ENCODE measurements at regions of chr14 and their contacts with region 1.

Region 1: DNA sequence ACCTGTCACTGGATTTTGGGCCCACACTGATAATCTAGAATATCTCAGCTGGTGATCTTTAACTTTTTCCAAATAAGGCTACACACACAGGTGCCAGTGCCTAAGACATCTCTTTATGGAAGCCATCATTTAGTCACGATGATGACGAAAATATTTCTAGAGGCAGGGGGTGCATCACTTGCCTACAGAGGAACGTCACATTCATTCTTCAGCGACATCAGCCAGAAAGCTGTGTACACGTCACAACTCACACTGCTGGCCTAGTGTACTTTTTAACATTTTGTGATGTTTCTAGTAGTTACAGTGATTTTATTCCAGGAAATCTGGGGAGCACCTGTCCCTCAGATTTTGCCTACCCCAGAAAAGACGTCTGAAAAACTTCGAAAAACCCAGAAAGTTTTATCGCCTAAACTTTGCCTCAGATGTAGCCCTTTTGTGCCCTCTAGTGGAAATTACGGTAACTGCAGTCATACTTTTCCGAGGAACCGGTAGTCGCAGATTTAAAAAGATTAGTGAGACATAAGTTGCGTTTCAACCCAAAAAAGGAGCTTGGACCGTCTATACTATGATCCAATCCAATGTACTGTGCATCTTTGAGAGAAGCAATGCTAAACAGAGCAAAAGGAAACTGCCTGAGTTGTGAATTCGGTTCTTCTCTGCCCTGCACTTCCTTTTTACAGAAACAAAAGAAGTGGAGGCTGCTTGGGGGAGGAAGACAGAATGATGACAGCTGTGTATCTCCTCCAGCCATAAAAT is 64.3 kb upstream of the STON2 start:
- DNase-seq: peak; percentile 60 to 63
- ATAC-seq: peak; percentile 67 to 80
- H3K4me3 ChIP-seq: peak overlapping the region; percentile 41
- H3K27ac ChIP-seq: peak overlapping the region; percentile 71 to 82
- H3K4me1 ChIP-seq: no peaks in the 10 kb centered on the region
- CTCF ChIP-seq: peak; percentile 92
- EP300 ChIP-seq: no peak
- POLR2A ChIP-seq: no peak
- RAD21 ChIP-seq: peak; percentile 83 to 90

Region 2: DNA sequence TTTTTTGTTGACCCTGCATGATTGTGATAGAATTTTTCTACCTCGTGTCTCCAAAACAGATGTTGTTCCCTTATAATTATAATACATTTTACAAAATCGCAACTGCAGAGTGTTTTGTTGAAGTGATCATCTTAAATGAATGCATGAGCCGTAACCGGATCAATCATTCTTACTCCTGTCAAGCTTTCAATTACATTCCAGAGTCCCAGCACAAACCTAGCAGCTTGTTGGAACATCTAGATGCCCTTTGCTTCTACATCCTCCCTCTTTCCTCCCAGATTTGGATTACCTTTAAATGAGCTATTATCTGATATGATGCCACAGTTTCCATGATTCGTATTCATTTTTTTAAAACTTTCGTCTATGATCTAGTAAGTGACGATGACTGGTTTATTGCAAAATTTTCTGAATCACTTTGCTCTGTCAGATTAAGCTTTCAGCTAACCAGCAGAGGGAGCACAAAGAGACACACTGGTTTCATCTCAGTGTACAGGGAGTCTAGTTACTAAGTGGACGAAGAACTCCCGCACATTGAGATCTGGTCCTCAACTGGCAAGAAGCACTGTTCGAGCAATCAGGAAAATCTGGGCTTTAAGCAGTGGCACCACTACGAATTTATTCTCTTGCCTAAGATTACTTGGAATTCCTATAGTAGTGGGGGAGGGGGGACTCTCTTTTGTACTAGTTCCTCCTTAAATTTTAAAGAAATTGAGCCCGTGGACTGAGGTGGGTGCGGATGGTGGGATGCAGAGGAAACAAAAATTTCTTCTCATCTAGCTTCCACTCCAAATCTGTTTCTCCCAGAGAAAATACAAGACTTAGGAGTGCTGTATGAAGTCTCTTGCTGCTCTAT is 468.1 kb before region 1 on chr14:
- CTCF ChIA-PET with region 1: interaction called, 11 read pairs
- POLR2A ChIA-PET with region 1: no interaction called
- DNase-seq: peak; percentile 65 to 78
- ATAC-seq: peak; percentile 94 to 99
- H3K4me3 ChIP-seq: no peak overlapping the region
- H3K27ac ChIP-seq: no peak overlapping the region
- H3K4me1 ChIP-seq: 0 out of 3 replicates have a peak, but pooled peaks cover 3% of the 10 kb centered on the region
- CTCF ChIP-seq: peak; percentile 76
- EP300 ChIP-seq: no peak
- POLR2A ChIP-seq: no peak
- RAD21 ChIP-seq: peak; percentile 55 to 60

Region 3: DNA sequence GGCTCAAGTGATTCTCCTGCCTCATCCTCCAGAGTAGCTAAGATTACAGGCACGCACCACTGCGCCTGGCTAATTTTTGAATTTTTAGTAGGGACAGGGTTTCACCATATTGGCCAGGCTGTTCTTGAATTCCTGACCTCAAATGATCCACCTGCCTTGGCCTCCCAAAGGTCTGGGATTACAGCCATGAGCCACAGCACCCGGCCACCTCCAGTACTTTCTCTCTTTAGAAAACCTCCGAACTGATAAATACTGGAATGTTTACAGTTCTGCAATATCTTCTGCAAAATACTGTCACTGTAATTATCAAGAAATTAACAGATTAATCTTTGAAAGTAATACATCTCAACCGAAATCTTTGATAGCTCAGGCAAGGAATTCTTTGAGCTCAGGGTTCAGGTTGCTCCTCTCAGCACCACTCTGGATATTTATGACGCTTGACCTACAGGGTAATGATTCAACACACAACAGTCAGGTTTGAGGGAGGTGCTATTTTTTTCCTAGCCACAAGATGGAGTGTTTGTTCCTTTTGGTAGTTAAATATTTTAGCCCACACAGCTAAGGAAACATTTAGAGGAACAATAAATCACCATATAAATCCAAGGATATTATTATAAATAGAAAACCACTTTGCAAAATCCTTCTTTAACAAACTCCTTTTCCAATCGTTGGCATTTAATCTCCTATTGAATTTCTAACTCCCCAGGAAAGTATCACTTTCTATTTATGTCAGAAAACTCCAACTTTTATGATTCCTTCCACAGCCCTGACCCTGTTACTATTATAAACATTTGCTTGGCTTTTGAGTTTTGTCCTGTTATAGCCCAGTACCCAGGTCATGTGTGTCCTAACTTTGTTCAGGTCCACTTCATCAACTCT is 195.1 kb before region 1 on chr14:
- CTCF ChIA-PET with region 1: interaction called, 112 read pairs
- POLR2A ChIA-PET with region 1: interaction called, 7 read pairs
- DNase-seq: peak; percentile 68 to 77
- ATAC-seq: peak; percentile 92 to 93
- H3K4me3 ChIP-seq: no peak overlapping the region
- H3K27ac ChIP-seq: no peak overlapping the region
- H3K4me1 ChIP-seq: no peaks in the 10 kb centered on the region
- CTCF ChIP-seq: peak; percentile 77
- EP300 ChIP-seq: no peak
- POLR2A ChIP-seq: no peak
- RAD21 ChIP-seq: peak; percentile 78

Region 4: GRCh38 chr14:81436296-81437138 is 27.9 kb before region 1 on chr14:
- CTCF ChIA-PET with region 1: interaction called, 15 read pairs
- POLR2A ChIA-PET with region 1: no interaction called
- DNase-seq: peak; percentile 58 to 83
- ATAC-seq: peak; percentile 92 to 99
- H3K4me3 ChIP-seq: peak overlapping the region; percentile 72
- H3K27ac ChIP-seq: peak overlapping the region; percentile 34 to 70; a peak in 5 of 6 replicates
- H3K4me1 ChIP-seq: peaks cover 11% of the 10 kb centered on the region
- CTCF ChIP-seq: no peak
- EP300 ChIP-seq: no peak
- POLR2A ChIP-seq: no peak
- RAD21 ChIP-seq: no peak

Region 5: DNA sequence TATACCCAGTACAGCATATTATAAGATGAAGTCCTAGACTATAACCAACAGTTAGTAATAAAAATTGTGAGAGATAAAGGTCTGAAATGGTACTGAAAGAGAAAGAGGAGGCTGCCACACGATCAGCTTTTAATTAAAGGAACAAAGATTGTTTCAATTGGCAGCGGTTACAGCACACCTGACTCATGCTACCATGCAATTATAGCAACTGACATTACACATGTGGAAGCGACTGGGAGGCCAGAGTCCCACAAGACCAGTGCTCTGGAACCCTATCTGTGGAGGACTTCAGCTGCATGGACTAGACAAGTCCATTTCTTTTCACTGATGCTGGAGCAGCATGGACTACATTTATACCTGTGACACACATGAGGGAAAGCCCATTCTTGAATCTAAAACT is 14.0 kb after region 1 on chr14:
- CTCF ChIA-PET with region 1: interaction called, 19 read pairs
- POLR2A ChIA-PET with region 1: no interaction called
- DNase-seq: no peak
- ATAC-seq: no peak
- H3K4me3 ChIP-seq: no peak overlapping the region
- H3K27ac ChIP-seq: no peak overlapping the region
- H3K4me1 ChIP-seq: no peaks in the 10 kb centered on the region
- CTCF ChIP-seq: no peak
- EP300 ChIP-seq: no peak
- POLR2A ChIP-seq: no peak
- RAD21 ChIP-seq: no peak

Region 6: GRCh38 chr14:81605660-81606059 is 141.2 kb after region 1 on chr14:
- CTCF ChIA-PET with region 1: no interaction called
- POLR2A ChIA-PET with region 1: no interaction called
- DNase-seq: no peak
- ATAC-seq: no peak
- H3K4me3 ChIP-seq: no peak overlapping the region
- H3K27ac ChIP-seq: no peak overlapping the region
- H3K4me1 ChIP-seq: no peaks in the 10 kb centered on the region
- CTCF ChIP-seq: no peak
- EP300 ChIP-seq: no peak
- POLR2A ChIP-seq: no peak
- RAD21 ChIP-seq: no peak

Measured in A549 (cell line).